ENCODE measurements at regions of chr1 and their contacts with region 1.

Region 1: DNA sequence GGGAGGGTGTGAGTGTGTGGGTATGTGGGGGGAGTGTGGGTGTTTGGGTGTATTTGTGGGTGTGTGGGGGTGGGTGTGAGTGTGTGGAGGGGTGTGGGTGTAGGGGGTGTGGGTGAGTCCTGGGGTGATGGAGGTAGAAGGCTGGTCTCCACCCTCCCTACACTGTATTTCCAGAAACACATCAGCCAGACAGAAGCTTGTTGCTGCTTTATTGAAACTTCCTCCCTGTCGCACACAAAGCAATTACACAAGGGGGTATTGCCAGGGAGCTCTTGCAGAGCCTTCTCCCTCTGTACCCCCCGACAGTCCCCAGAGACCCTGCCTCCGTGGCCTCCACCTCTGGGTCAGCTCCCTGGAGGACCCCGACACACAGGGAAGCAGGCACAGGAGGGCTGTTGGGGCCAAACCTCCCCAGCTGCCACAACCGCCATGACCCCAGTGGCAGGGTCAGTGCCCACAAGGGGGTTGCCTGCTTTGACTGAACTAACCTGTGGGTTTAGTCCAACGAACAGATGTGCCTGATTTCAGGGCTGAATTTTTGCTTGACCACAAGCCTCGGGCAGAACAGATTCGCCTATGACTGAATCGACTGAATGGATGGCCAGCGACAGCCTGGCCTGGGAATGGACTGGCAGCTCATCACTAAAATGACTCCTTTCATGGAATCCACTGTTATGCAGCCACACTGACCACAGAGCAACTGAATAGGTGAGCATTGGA is 9.1 kb upstream of the MATN1 start:
- DNase-seq: peak; percentile 76
- ATAC-seq: peak; percentile 50
- H3K4me3 ChIP-seq: no peak overlapping the region
- H3K4me3 Mint-ChIP-seq: peak overlapping the region; percentile 19
- H3K27ac ChIP-seq: peak overlapping the region; percentile 70 to 82
- H3K27ac Mint-ChIP-seq: peak overlapping the region; percentile 94
- H3K4me1 ChIP-seq: peaks cover 41 to 59% of the 10 kb centered on the region in 2 donors
- H3K4me1 Mint-ChIP-seq: peaks cover 75% of the 10 kb centered on the region
- H3K27me3 ChIP-seq: no peaks in the 10 kb centered on the region
- H3K27me3 Mint-ChIP-seq: no peaks in the 10 kb centered on the region
- CTCF ChIP-seq: no peak

Region 2: GRCh38 chr1:30743584-30744059 is 11.2 kb after region 1 on chr1:
- CTCF ChIA-PET with region 1: interaction called, 769 read pairs
- POLR2A ChIA-PET with region 1: interaction called, 14 read pairs
- intact Hi-C with region 1: loop called (anchors 1 kb)
- DNase-seq: peak; percentile 88
- ATAC-seq: peak; percentile 79
- H3K4me3 ChIP-seq: peak overlapping the region in 4 of 5 experiments; percentile 16 to 62 (median 28)
- H3K4me3 Mint-ChIP-seq: peak overlapping the region; percentile 78
- H3K27ac ChIP-seq: peak overlapping the region; percentile 98 to 100
- H3K27ac Mint-ChIP-seq: peak overlapping the region; percentile 87
- H3K4me1 ChIP-seq: peaks cover 84 to 99% of the 10 kb centered on the region in 2 donors
- H3K4me1 Mint-ChIP-seq: peaks cover 99% of the 10 kb centered on the region
- H3K27me3 ChIP-seq: no peaks in the 10 kb centered on the region
- H3K27me3 Mint-ChIP-seq: no peaks in the 10 kb centered on the region
- CTCF ChIP-seq: no peak

Region 3: GRCh38 chr1:30748699-30749401 is 16.4 kb after region 1 on chr1:
- CTCF ChIA-PET with region 1: interaction called, 769 read pairs
- POLR2A ChIA-PET with region 1: interaction called, 21 read pairs
- intact Hi-C with region 1: loop called (anchors 2 kb)
- DNase-seq: no peak
- ATAC-seq: no peak
- H3K4me3 ChIP-seq: peak overlapping the region in 4 of 5 experiments; percentile 10 to 96 (median 32)
- H3K4me3 Mint-ChIP-seq: peak overlapping the region; percentile 89
- H3K27ac ChIP-seq: peak overlapping the region; percentile 98 to 100
- H3K27ac Mint-ChIP-seq: peak overlapping the region; percentile 97
- H3K4me1 ChIP-seq: peaks cover 96 to 100% of the 10 kb centered on the region in 2 donors
- H3K4me1 Mint-ChIP-seq: peaks cover 97% of the 10 kb centered on the region
- H3K27me3 ChIP-seq: no peaks in the 10 kb centered on the region
- H3K27me3 Mint-ChIP-seq: no peaks in the 10 kb centered on the region
- CTCF ChIP-seq: no peak

Region 4: GRCh38 chr1:30756545-30757195 is 24.2 kb after region 1 on chr1:
- CTCF ChIA-PET with region 1: interaction called, 769 read pairs
- POLR2A ChIA-PET with region 1: interaction called, 28 read pairs
- intact Hi-C with region 1: no loop called
- DNase-seq: peak; percentile 87
- ATAC-seq: peak; percentile 19
- H3K4me3 ChIP-seq: peak overlapping the region; percentile 80 to 97 (median 95)
- H3K4me3 Mint-ChIP-seq: peak overlapping the region; percentile 92
- H3K27ac ChIP-seq: peak overlapping the region; percentile 98 to 100
- H3K27ac Mint-ChIP-seq: peak overlapping the region; percentile 92
- H3K4me1 ChIP-seq: peaks cover 62 to 87% of the 10 kb centered on the region in 2 donors
- H3K4me1 Mint-ChIP-seq: peaks cover 78% of the 10 kb centered on the region
- H3K27me3 ChIP-seq: no peaks in the 10 kb centered on the region
- H3K27me3 Mint-ChIP-seq: no peaks in the 10 kb centered on the region
- CTCF ChIP-seq: no peak

Region 5: GRCh38 chr1:30763651-30764248 is 31.3 kb after region 1 on chr1:
- CTCF ChIA-PET with region 1: interaction called, 769 read pairs
- POLR2A ChIA-PET with region 1: interaction called, 28 read pairs
- intact Hi-C with region 1: no loop called
- DNase-seq: no peak
- ATAC-seq: no peak
- H3K4me3 ChIP-seq: no peak overlapping the region
- H3K4me3 Mint-ChIP-seq: no peak overlapping the region
- H3K27ac ChIP-seq: peak overlapping the region in 1 of 2 donors; percentile 98
- H3K27ac Mint-ChIP-seq: peak overlapping the region; percentile 95
- H3K4me1 ChIP-seq: peaks cover 58 to 67% of the 10 kb centered on the region in 2 donors
- H3K4me1 Mint-ChIP-seq: peaks cover 75% of the 10 kb centered on the region
- H3K27me3 ChIP-seq: no peaks in the 10 kb centered on the region
- H3K27me3 Mint-ChIP-seq: no peaks in the 10 kb centered on the region
- CTCF ChIP-seq: no peak

Measured in B cell (primary cell).